HCT116 (cell line): ENCODE measurements at regions of chr7 and their contacts with region 1.

Region 1: GRCh38 chr7:22980422-22980821 is 33.5 kb downstream of the HYCC1 start:
- DNase-seq: no peak
- ATAC-seq: no peak
- H3K4me3 ChIP-seq: no peak overlapping the region
- H3K27ac ChIP-seq: no peak overlapping the region
- H3K4me1 ChIP-seq: peaks cover 0 to 6% of the 10 kb centered on the region in 2 experiments; a peak in 1 of 4 replicates
- H3K27me3 ChIP-seq: no peaks in the 10 kb centered on the region
- CTCF ChIP-seq: no peak
- POLR2A ChIP-seq: no peak
- RAD21 ChIP-seq: no peak

Region 2: GRCh38 chr7:22992874-22993840 is 12.7 kb after region 1 on chr7:
- CTCF ChIA-PET with region 1: no interaction called
- POLR2A ChIA-PET with region 1: no interaction called
- RAD21 ChIA-PET with region 1: no interaction called
- intact Hi-C with region 1: loop called (anchors 1 kb)
- DNase-seq: no peak
- ATAC-seq: no peak
- H3K4me3 ChIP-seq: no peak overlapping the region
- H3K27ac ChIP-seq: no peak overlapping the region
- H3K4me1 ChIP-seq: no peaks in the 10 kb centered on the region
- H3K27me3 ChIP-seq: no peaks in the 10 kb centered on the region
- CTCF ChIP-seq: no peak
- POLR2A ChIP-seq: no peak
- RAD21 ChIP-seq: no peak